PC-3 (cell line): ENCODE measurements at regions of chr1 and their contacts with region 1.

Region 1: DNA sequence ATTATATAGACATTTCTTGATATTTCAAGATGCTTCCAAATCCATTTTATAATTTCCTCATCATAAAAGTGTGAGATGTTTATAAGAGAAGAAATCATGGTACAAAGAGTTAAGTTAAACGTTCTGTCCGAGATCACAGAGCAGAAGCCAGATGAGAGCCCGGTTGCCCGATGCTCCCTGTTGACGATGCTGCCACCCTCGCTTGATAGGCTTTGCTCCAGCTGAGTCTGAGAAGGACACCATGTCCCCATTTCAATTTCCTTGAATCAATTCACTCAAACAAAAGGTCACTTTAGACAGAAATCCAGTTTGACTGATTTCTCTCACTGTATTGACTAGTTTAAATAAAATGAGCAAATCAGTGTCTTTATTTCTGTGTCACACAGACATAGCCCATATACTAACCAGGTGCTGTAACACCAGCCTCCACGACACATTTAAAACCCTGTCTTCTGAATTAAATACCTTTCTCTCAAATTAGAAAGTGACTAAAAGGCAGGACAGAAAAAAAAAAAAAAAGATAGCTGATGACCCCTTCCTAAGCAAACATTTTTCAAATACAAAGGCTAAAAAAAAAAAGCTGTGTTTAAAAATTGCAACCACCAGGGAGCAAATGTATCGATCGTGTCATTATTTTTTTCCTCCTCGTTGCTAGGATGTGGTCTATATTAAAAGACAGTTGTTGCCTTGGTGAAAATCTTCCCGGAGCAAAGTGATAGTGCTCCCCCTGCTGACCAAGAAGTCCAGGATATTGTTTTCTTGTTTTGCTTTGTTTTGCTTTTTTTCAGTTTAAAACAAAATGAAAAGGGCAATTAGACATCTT is 35.2 kb downstream of the DNASE2B start:
- DNase-seq: peak; percentile 82
- ATAC-seq: peak; percentile 75
- H3K4me3 ChIP-seq: peak overlapping the region; percentile 57
- H3K27ac ChIP-seq: peak overlapping the region; percentile 38
- H3K4me1 ChIP-seq: peaks cover 22% of the 10 kb centered on the region
- H3K27me3 ChIP-seq: no peaks in the 10 kb centered on the region
- CTCF ChIP-seq: peak; percentile 91

Region 2: DNA sequence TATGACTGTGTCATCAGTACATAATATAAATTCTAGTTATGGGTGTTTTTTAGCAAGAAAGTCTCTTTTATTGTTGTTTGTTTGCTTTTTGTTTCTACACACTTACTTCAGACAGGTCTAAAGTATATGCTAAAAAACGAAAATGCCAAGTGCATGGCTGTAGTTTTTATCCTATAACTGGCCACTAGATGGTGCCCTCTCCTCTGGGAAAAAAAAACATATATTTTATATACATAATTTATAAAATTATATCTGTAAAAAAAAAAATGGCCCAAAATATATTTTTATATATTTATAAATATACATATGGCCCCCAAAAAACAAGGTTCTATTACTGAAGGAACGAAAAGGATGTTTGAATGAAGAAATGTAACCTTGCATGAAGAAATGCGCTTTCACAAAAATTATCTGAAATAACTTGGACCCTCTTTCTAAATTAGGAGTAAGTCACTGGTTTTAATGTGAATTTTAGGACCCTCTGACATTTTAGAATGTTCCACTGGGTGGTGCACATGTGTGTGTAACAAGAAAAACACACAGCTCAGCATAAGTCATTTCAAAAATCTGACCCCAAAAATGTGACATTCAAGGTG is 528.1 kb before region 1 on chr1:
- CTCF ChIA-PET with region 1: no interaction called
- POLR2A ChIA-PET with region 1: no interaction called
- intact Hi-C with region 1: loop called (anchors 10 kb)
- DNase-seq: peak; percentile 51
- ATAC-seq: no peak
- H3K4me3 ChIP-seq: no peak overlapping the region
- H3K27ac ChIP-seq: no peak overlapping the region
- H3K4me1 ChIP-seq: peaks cover 21% of the 10 kb centered on the region
- H3K27me3 ChIP-seq: no peaks in the 10 kb centered on the region
- CTCF ChIP-seq: peak; percentile 45

Region 3: GRCh38 chr1:84247425-84248220 is 185.8 kb before region 1 on chr1:
- CTCF ChIA-PET with region 1: no interaction called
- POLR2A ChIA-PET with region 1: no interaction called
- intact Hi-C with region 1: loop called (anchors 1 kb)
- DNase-seq: peak; percentile 98
- ATAC-seq: peak; percentile 95
- H3K4me3 ChIP-seq: peak overlapping the region; percentile 51
- H3K27ac ChIP-seq: peak overlapping the region; percentile 98
- H3K4me1 ChIP-seq: peaks cover 35% of the 10 kb centered on the region
- H3K27me3 ChIP-seq: no peaks in the 10 kb centered on the region
- CTCF ChIP-seq: no peak

Region 4: GRCh38 chr1:84298328-84298683 is 135.2 kb before region 1 on chr1:
- CTCF ChIA-PET with region 1: interaction called, 10 read pairs
- POLR2A ChIA-PET with region 1: no interaction called
- intact Hi-C with region 1: loop called (anchors 2 kb)
- DNase-seq: peak; percentile 47
- ATAC-seq: peak; percentile 67
- H3K4me3 ChIP-seq: peak overlapping the region; percentile 82
- H3K27ac ChIP-seq: peak overlapping the region; percentile 80
- H3K4me1 ChIP-seq: peaks cover 49% of the 10 kb centered on the region
- H3K27me3 ChIP-seq: no peaks in the 10 kb centered on the region
- CTCF ChIP-seq: no peak

Region 5: GRCh38 chr1:84452436-84452835 is 19.0 kb after region 1 on chr1:
- CTCF ChIA-PET with region 1: no interaction called
- POLR2A ChIA-PET with region 1: no interaction called
- intact Hi-C with region 1: no loop called
- DNase-seq: no peak
- ATAC-seq: no peak
- H3K4me3 ChIP-seq: no peak overlapping the region
- H3K27ac ChIP-seq: no peak overlapping the region
- H3K4me1 ChIP-seq: no peaks in the 10 kb centered on the region
- H3K27me3 ChIP-seq: no peaks in the 10 kb centered on the region
- CTCF ChIP-seq: no peak

Region 6: DNA sequence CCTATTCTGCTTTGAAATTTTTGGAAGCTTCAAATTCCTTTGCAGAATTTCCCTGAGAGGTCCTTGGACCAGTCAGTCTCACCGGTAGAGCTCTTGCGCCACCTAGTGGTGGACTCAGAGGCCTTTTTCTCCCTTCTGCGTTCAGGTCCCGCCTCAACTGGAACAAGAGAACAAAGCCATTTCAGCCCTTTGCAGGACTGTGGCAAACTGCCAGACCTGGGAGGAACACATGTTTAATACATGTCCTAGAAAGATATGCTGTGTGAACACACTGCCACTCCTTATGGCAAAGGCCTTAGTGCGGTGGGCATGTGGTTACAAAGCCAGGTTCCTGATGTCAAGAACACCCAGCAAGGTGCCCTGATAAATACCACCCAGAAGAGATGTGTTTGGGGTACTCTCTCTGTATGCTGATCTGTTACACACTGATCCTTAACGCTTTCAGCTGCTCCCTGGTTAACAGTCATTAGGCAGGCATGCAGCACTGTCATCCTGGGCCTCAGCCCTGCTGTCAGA is 339.0 kb after region 1 on chr1:
- CTCF ChIA-PET with region 1: no interaction called
- POLR2A ChIA-PET with region 1: interaction called, 11 read pairs
- intact Hi-C with region 1: no loop called
- DNase-seq: peak; percentile 92
- ATAC-seq: peak; percentile 31
- H3K4me3 ChIP-seq: no peak overlapping the region
- H3K27ac ChIP-seq: peak overlapping the region; percentile 99
- H3K4me1 ChIP-seq: peaks cover 49% of the 10 kb centered on the region
- H3K27me3 ChIP-seq: no peaks in the 10 kb centered on the region
- CTCF ChIP-seq: peak; percentile 93

Region 7: GRCh38 chr1:85214657-85215056 is 781.2 kb after region 1 on chr1:
- CTCF ChIA-PET with region 1: no interaction called
- POLR2A ChIA-PET with region 1: no interaction called
- intact Hi-C with region 1: no loop called
- DNase-seq: peak; percentile 79
- ATAC-seq: peak; percentile 92
- H3K4me3 ChIP-seq: peak overlapping the region; percentile 56
- H3K27ac ChIP-seq: peak overlapping the region; percentile 55
- H3K4me1 ChIP-seq: peaks cover 19% of the 10 kb centered on the region
- H3K27me3 ChIP-seq: no peaks in the 10 kb centered on the region
- CTCF ChIP-seq: no peak